Spleen (tissue), 13 donors: ENCODE measurements at regions of chr2 and their contacts with region 1.

Region 1: DNA sequence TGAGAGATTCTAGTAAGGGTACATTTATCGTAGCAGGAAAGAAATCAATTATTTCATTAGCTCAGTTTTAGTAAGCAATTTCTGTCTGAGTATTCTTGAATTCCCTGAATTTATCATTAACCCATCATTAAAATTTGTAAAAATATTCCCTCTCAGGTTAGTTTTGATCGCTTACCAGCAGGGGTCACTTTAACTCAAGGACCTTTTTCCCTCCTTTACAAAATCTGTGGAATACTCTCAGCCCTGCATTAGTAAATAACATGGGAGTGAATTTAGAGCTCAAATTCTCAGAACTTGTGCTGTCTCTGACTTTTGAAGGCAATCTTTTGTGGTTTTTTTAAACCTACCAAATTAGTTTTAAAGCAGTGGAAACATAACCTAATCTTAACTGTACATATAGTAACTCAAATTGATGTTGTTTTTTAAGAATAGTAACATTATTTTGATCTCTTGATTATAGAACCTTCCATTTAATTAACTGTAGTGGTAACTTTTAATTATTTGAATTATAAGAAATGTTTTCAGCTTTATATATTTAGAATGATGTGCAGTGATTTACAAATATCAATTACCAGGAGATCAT is 97.2 kb downstream of the AGPS start:
- DNase-seq: no peak
- H3K4me3 ChIP-seq: no peak overlapping the region
- H3K27ac ChIP-seq: no peak overlapping the region
- H3K4me1 ChIP-seq: peaks cover 0 to 3% (median 0%) of the 10 kb centered on the region in 6 donors
- H3K27me3 ChIP-seq: no peaks in the 10 kb centered on the region
- CTCF ChIP-seq: peak in 8 of 11 experiments; percentile 13 to 51 (median 32)
- POLR2A ChIP-seq: no peak

Region 2: GRCh38 chr2:177724398-177725287 is 234.8 kb after region 1 on chr2:
- intact Hi-C with region 1: loop called (anchors 10 kb)
- DNase-seq: no peak
- H3K4me3 ChIP-seq: no peak overlapping the region
- H3K27ac ChIP-seq: no peak overlapping the region
- H3K4me1 ChIP-seq: peaks cover 0 to 4% (median 0%) of the 10 kb centered on the region in 6 donors
- H3K27me3 ChIP-seq: no peaks in the 10 kb centered on the region
- CTCF ChIP-seq: peak in 10 of 11 experiments; percentile 52 to 83 (median 78)
- POLR2A ChIP-seq: no peak